ENCODE measurements at regions of chr5 and their contacts with region 1.

Region 1: GRCh38 chr5:119179857-119180641 is 109.2 kb downstream of the DMXL1 start:
- DNase-seq: peak; percentile 10
- H3K4me3 ChIP-seq: no peak overlapping the region
- H3K27ac ChIP-seq: peak overlapping the region in 1 of 2 donors; percentile 18
- H3K4me1 ChIP-seq: no peaks in the 10 kb centered on the region
- H3K27me3 ChIP-seq: no peaks in the 10 kb centered on the region
- CTCF ChIP-seq: no peak
- POLR2A ChIP-seq: no peak

Region 2: DNA sequence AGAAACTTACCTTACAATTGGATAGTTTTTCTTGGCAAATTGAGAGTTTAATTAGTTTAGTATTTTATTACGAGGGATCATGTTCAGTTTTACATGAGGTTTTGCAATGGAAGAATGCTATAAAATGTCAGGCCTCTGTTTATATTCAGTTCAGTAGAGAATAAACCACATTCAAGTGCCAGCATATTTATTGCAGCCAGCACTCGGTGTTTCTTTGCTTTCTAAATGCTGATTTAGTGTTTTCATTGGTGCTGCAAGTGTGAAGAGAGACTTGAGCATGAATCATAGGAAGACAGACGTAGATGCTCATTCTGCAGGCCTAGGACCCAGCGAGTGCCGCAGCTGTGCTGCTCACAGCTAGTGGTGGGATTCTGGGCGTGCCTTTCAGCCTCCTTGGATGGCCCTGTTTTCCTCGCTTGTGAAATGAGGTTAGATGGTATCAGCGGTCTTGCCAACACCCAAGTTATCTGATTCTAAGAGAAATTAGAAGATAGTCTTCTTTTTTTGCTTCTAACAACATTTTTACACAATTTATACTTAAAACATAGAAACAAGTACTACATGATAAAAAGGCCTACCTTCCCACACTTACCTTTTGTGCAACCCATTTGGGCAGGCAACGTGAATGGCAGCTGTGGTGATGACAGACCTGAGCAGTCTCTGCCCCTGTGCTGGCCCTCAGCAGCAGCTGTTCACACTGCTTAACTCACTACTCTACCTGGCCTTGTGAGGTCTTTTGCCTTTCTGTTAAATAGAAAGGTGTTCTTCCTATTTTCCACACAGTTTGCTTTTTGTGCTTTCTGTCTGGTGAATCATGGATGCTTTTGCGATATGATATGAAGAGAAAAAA is 148.9 kb after region 1 on chr5:
- intact Hi-C with region 1: loop called (anchors 10 kb)
- DNase-seq: peak; percentile 77
- H3K4me3 ChIP-seq: no peak overlapping the region
- H3K27ac ChIP-seq: peak overlapping the region; percentile 14 to 62
- H3K4me1 ChIP-seq: peaks cover 15% of the 10 kb centered on the region
- H3K27me3 ChIP-seq: no peaks in the 10 kb centered on the region
- CTCF ChIP-seq: no peak
- POLR2A ChIP-seq: no peak

Measured in prostate gland (tissue), 2 donors.